ENCODE measurements at regions of chr1 and their contacts with region 1.

Region 1: DNA sequence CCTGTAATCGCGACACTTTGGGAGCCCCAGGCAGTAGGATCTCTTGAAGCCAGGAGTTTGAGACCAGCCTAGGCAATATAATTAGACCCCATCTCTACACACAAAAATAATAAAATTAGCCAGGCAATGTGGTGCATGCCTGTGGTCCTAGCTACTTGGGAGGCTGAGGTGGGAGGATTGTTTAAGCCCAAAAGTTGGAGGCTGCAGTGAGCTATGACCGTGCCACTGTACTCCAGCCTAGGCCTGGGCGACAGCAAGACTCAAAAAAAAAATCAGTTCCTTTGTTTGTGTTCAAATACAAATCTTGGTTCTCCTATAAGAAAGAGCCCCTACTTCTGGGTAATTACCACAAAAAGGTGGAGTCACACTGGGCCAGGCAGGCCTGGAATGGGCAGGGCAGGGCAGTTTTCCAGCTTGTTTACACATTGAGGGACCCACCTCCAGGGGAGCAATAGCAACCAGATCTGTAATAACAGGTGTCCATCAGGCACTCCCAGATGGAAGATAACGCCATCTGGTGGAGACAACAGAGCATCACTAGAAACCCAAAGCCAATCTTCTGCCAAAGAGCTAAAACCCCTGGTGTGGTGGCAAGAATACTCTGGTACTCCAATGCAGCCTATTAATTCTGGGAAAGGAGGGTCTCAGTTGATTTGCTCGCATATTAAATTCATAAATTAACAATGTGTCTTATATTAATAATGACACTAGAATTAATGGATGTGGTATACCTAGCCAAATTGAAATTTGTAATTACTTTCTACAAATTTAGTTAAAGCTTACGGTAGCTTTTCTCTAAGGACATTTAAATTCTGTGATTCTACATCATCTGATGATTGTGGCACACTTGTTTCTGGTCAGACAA is 13.2 kb downstream of the PPP1R15B start:
- DNase-seq: no peak
- H3K4me3 ChIP-seq: no peak overlapping the region
- H3K27ac ChIP-seq: no peak overlapping the region
- H3K27me3 ChIP-seq: no peaks in the 10 kb centered on the region
- CTCF ChIP-seq: peak; percentile 85

Region 2: DNA sequence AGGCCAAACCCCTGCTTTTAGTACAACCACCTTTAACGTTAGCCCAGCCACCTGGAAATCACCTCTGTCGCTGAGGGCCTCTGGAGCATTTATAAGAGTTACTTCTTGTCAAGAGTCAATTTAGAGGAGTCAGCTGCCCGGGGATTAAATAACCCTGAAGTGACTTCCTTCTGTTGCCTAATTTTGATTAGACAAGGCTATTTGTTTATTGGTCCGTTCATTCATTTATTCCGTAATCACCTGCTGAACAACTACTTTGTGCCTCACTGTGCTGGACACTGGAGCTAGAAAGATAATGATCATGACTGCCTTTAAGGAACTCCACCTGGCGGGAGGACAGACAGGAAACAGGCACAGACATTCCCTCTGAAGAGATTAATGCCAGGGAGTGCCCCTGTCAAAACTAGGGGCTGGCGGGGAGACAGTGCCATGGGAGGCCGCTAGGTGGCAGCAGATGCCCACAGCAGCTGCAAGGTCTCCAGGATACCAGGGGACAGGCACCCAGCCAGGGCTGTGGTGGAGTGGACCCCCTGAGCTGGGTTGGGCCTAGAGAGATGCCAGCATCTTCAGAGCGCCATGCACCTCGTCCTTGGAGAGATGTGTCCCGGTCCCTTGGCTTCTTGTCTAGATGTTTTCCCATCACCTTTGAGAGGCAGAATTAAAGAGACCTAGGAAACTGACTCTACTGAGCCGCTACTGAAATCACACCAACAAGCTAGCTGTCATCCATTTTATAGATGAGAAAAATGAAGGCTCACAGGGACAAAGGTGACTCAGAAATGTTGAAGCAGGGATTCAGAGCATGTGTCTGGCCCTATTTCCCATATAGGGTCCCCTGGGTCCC is 236.0 kb before region 1 on chr1:
- CTCF ChIA-PET with region 1: interaction called, 122 read pairs
- POLR2A ChIA-PET with region 1: no interaction called
- DNase-seq: no peak
- H3K4me3 ChIP-seq: no peak overlapping the region
- H3K27ac ChIP-seq: no peak overlapping the region
- H3K27me3 ChIP-seq: peaks cover 6% of the 10 kb centered on the region
- CTCF ChIP-seq: peak; percentile 100

Region 3: DNA sequence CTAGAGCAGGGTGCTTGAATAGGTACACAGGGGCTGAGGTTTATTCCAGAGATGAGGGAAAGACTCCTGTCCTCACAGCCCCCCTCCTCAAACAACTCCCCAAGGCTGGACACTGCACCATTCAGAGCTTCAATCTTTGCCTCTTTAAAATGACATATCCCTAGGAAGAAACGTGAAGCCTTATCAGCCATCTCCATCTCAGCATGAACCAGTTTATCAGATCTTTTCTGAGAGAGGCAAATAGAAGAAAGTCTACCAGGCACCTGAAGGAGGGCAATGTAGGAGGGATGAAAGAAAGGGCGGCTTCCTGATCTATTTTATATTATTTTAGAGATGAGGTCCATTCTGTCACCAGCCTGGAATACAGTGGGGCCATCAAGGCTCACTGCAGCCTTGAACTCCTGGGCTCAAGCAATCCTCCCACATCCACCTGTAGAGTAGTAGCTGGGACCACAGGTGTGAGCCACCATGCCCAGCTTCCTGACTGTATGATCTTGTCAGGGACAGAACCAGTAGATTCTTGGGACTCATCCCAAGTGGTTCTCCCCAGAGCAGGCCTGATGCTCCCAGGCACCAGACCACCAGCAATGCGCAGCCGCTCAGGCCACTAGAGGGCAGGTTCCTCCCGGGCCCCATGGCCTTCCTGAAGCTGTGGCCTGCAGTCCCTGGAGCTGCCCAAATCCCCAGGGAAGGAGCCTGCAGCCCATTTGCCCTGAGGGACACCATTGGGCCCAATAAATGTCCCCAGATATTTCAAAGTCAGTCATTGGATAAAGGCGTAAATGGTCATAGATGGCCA is 140.3 kb before region 1 on chr1:
- CTCF ChIA-PET with region 1: interaction called, 41 read pairs
- POLR2A ChIA-PET with region 1: no interaction called
- DNase-seq: peak; percentile 20
- H3K4me3 ChIP-seq: no peak overlapping the region
- H3K27ac ChIP-seq: no peak overlapping the region
- H3K27me3 ChIP-seq: no peaks in the 10 kb centered on the region
- CTCF ChIP-seq: peak; percentile 89

Region 4: DNA sequence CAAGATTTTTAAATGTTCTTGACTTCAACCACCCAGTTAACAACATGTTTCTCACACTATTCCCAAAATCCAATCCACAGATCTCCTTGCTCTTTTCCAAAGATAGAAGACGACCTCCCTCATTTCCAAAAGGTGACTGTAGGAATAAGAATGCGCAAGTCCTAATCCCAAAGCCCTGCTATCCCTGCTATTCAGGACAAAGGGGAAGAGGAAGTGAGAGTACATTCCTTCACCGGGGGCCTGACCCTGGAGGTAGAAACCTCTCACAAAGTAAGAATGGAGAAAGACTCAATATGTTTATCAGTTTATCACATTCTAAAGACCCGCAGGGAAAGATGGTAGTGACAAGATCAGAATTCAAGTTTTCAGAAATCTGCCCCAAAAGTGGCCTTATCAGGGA is 94.4 kb before region 1 on chr1:
- CTCF ChIA-PET with region 1: no interaction called
- POLR2A ChIA-PET with region 1: no interaction called
- DNase-seq: no peak
- H3K4me3 ChIP-seq: no peak overlapping the region
- H3K27ac ChIP-seq: no peak overlapping the region
- H3K27me3 ChIP-seq: no peaks in the 10 kb centered on the region
- CTCF ChIP-seq: no peak

Region 5: DNA sequence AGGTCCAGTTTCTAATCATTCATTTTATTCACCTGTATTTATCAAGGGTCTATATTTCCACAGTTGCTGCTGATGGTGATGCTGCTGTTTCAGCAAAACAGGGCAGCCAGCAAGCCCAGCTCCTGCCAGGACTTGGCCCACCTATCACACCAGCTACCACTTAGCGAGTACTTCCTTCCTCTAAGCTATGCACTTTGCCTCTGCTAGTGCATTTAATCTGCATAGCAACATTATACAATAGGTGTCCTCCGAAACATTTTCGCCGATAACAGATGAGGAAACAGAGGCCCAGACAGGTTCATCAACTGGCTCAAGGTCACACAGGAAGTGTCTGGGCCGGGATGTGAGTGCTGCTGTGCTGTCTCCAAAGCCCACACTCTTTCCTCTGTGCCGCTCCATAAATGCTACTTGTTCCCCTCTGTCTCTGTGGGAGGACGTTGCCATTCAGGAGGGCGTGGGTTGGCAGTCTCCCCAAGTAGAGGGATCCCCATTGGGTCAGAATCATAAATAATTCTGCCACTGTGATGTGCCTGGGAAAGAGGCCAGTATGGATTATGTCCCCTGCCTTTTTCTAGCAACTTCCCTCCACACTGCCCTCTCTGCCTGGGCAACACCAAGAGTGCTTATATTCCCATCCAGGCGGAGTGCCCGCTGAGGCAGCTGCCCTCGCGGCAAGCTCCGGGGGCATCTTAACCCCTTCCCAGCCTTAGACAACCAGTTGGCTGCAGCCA is 29.3 kb before region 1 on chr1:
- CTCF ChIA-PET with region 1: interaction called, 55 read pairs
- POLR2A ChIA-PET with region 1: no interaction called
- DNase-seq: no peak
- H3K4me3 ChIP-seq: no peak overlapping the region
- H3K27ac ChIP-seq: no peak overlapping the region
- H3K27me3 ChIP-seq: peaks cover 50% of the 10 kb centered on the region
- CTCF ChIP-seq: no peak

Region 6: GRCh38 chr1:204411451-204412204 is 13.2 kb after region 1 on chr1 and contains the start of gene PPP1R15B:
- CTCF ChIA-PET with region 1: interaction called, 36 read pairs
- POLR2A ChIA-PET with region 1: no interaction called
- DNase-seq: peak; percentile 97
- H3K4me3 ChIP-seq: peak within 1 kb of the TSS; percentile 98
- H3K27ac ChIP-seq: peak within 1 kb of the TSS; percentile 98
- H3K27me3 ChIP-seq: no peaks in the 10 kb centered on the region
- CTCF ChIP-seq: no peak
- polyA plus RNA-seq, gene PPP1R15B: 25.4 and 28.4 TPM in 2 replicates

Region 7: DNA sequence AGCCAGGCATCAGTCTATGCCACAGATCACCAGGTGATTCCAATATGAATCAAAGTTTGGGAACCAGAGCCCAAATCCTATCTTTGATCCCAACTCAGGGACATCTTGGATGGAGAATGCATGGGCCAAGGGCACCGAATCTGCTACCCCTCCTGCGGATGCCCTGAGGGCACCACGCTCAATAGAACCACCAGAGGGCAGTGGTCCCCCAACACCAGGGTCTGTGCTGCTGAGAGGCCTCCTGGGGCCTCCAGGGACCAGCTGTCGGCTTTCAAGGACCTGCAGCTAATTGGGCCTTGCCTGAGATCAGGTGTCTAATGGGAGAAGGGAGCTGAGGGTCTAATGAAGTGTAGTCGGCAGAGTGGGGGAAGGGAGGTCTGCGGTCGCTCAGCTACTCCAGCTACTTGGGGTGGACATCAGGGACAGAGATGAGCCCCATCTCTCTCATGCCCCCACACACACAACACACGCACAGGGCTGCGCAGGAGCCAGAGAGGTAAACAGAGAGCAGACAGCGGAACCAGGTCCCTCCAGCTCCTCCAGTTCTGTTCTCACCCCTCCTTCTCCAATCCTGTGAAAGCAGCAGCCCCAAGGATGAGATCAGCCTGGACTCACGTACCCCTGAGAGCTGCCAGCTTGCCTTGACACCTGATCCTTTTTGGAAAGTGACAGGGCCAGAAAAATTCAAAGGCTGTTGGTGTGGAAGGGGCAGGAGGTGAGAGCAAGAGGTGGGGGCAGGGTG is 48.1 kb after region 1 on chr1:
- CTCF ChIA-PET with region 1: interaction called, 11 read pairs
- POLR2A ChIA-PET with region 1: no interaction called
- DNase-seq: no peak
- H3K4me3 ChIP-seq: no peak overlapping the region
- H3K27ac ChIP-seq: no peak overlapping the region
- H3K27me3 ChIP-seq: no peaks in the 10 kb centered on the region
- CTCF ChIP-seq: peak; percentile 81